Dorsolateral prefrontal cortex (tissue), 120 donors: ENCODE measurements at regions of chr5 and their contacts with region 1.

Region 1: GRCh38 chr5:72611118-72611730 is 104.0 kb upstream of the ZNF366 start:
- DNase-seq: peak; percentile 71 to 91 (median 86)
- H3K4me3 ChIP-seq: peak overlapping the region in 50 of 59 donors; percentile 2 to 59 (median 27)
- H3K27ac ChIP-seq: peak overlapping the region in 56 of 59 donors; percentile 5 to 89 (median 72)
- H3K27me3 ChIP-seq: no peaks in the 10 kb centered on the region
- CTCF ChIP-seq: peak; percentile 82 to 98 (median 94)

Region 2: GRCh38 chr5:72510610-72511181 is 100.5 kb before region 1 on chr5:
- intact Hi-C with region 1: loop called in 1 of 2 experiments (anchors 5 kb)
- DNase-seq: peak in 9 of 10 donors; percentile 13 to 77 (median 60)
- H3K4me3 ChIP-seq: peak overlapping the region in 5 of 59 donors; percentile 6 to 34 (median 24)
- H3K27ac ChIP-seq: peak overlapping the region in 45 of 59 donors; percentile 3 to 82 (median 59)
- H3K27me3 ChIP-seq: no peaks in the 10 kb centered on the region
- CTCF ChIP-seq: no peak

Region 3: DNA sequence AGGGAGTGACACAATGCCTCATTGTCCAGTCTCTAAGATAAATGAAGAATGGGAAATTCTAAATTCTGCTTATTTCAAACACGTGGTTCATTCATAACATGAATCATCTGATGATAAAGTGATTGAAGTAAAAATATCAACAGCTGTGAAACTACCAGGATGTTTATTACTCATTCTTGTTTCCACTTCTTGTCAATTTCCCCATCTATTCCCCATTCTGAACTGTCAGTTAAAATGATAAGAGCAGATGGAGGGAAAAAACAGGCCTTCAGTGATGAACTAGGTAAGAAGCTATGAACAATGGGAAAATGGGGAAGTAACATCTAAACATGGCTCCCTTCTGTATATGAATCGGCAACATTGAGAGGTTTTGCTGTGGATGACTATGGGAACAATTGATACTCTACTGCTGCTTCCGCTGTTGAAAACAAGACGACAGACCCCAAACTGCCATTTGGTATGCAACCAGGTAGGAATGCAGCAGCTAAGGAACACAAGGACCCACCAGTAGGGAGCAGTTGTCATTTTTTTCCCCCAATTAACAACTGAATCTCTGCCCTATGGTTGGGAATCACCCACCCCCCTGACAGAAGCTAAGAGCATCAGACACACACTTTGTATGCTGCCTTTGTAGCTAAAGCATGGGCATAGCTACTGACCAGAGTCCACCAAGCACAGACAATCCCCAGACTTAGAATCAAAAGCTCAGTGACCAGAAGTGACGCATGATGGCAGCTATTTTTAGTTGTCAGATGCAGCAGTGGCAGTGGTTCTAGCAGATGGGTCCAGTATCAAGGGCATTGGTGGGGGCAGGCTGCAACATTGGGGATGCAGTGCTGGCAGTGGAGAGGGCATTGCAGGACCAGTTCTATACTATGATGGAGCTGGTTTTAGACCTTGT is 51.1 kb before region 1 on chr5:
- intact Hi-C with region 1: loop called in 1 of 2 experiments (anchors 5 kb)
- DNase-seq: peak in 1 of 10 donors; percentile 65
- H3K4me3 ChIP-seq: no peak overlapping the region
- H3K27ac ChIP-seq: peak overlapping the region in 16 of 59 donors; percentile 6 to 73 (median 36)
- H3K27me3 ChIP-seq: no peaks in the 10 kb centered on the region
- CTCF ChIP-seq: no peak

Region 4: GRCh38 chr5:72572236-72572765 is 38.9 kb before region 1 on chr5:
- intact Hi-C with region 1: no loop called
- DNase-seq: no peak
- H3K4me3 ChIP-seq: no peak overlapping the region
- H3K27ac ChIP-seq: no peak overlapping the region
- H3K27me3 ChIP-seq: no peaks in the 10 kb centered on the region
- CTCF ChIP-seq: no peak